ENCODE measurements at regions of chr12 and their contacts with region 1.

Region 1: GRCh38 chr12:32494656-32495055 is 95.3 kb downstream of the FGD4 start:
- DNase-seq: no peak
- ATAC-seq: no peak

Region 2: GRCh38 chr12:32533971-32534590 is 39.4 kb after region 1 on chr12:
- intact Hi-C with region 1: loop called (anchors 5 kb)
- DNase-seq: no peak
- ATAC-seq: peak; percentile 84

Region 3: GRCh38 chr12:32545423-32545980 is 50.8 kb after region 1 on chr12:
- intact Hi-C with region 1: no loop called
- DNase-seq: no peak
- ATAC-seq: no peak

Region 4: GRCh38 chr12:32568241-32568640 is 73.6 kb after region 1 on chr12:
- intact Hi-C with region 1: no loop called
- DNase-seq: no peak
- ATAC-seq: peak; percentile 64

Measured in Right ventricle myocardium inferior (tissue), 1 donor.